ENCODE measurements at regions of chr3 and their contacts with region 1.

Region 1: GRCh38 chr3:119676771-119677640 is at the start of gene COX17:
- DNase-seq: peak; percentile 98
- H3K4me3 Mint-ChIP-seq: peak within 1 kb of the TSS; percentile 79
- H3K27ac Mint-ChIP-seq: peak within 1 kb of the TSS; percentile 91
- H3K4me1 Mint-ChIP-seq: peaks cover 8% of the 10 kb centered on the region
- H3K27me3 Mint-ChIP-seq: no peaks in the 10 kb centered on the region
- CTCF ChIP-seq: no peak
- total RNA-seq, gene COX17: 47.9 and 55.4 TPM in 2 replicates

Region 2: DNA sequence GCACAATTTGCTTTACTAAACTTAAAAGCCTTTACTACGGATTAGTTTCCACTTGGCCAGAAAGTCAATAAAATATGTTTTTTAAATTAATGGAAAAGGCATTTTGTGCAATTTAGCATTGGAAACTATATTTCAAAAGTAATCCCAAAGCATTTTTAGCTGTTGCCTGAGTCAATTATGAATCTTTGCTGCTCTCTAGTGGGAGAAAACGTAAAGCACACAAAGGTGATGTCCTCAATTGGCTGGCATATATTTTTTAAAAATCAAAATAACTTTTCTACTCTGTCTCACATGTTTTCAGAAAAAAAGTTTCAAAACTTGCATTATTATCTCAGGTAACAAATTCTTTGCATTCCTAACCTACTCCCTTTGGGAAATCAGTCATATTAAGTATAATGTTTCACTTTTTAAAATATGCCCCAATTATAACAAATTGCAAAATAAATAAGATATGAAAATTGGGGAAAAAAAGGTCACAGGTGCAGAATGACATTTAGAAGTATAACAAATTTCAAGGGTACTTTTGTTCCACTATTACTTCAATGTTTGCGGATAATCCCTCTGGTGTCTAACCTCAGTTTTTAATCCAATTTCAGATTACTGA is 578.3 kb before region 1 on chr3:
- CTCF ChIA-PET with region 1: interaction called, 4 read pairs
- POLR2A ChIA-PET with region 1: no interaction called
- intact Hi-C with region 1: loop called (anchors 1 kb)
- DNase-seq: peak; percentile 56
- H3K4me3 Mint-ChIP-seq: no peak overlapping the region
- H3K27ac Mint-ChIP-seq: no peak overlapping the region
- H3K4me1 Mint-ChIP-seq: peaks cover 10% of the 10 kb centered on the region
- H3K27me3 Mint-ChIP-seq: no peaks in the 10 kb centered on the region
- CTCF ChIP-seq: peak; percentile 85

Region 3: DNA sequence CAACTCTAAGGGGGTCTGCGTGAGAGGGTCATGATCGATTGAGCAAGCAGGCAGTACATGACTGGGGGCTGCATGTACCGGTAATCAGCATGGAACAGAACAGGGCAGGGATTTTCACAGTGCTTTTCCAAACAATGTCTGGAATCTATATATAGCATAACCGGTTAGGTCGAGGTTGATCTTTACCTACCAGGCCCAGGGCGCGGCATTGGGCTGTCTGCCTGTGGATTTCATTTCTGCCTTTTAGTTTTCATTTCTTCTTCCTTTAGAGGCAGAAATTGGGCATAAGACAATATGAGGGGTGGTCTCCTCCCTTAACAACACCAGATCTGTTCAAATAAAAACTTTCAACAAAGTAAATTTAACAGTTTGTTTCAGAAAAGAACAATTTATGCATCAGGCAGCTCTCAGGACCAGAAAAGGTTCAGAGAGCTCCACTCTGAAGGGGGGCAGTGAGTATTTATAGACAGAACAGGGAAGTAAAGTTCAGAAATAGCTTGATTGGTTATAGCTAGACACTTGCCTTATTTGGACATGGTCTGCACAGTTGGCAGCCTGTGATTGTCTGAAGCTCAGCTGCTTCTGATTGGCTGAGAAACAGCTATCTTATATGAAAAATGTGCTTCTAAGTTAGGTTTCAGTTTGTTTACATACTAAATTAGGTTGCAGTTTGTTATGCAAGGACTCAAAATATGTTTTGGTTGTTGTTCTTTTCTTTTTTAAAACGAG is 419.2 kb before region 1 on chr3:
- CTCF ChIA-PET with region 1: no interaction called
- POLR2A ChIA-PET with region 1: no interaction called
- intact Hi-C with region 1: no loop called
- DNase-seq: peak; percentile 19
- H3K4me3 Mint-ChIP-seq: no peak overlapping the region
- H3K27ac Mint-ChIP-seq: no peak overlapping the region
- H3K4me1 Mint-ChIP-seq: no peaks in the 10 kb centered on the region
- H3K27me3 Mint-ChIP-seq: no peaks in the 10 kb centered on the region
- CTCF ChIP-seq: no peak

Region 4: DNA sequence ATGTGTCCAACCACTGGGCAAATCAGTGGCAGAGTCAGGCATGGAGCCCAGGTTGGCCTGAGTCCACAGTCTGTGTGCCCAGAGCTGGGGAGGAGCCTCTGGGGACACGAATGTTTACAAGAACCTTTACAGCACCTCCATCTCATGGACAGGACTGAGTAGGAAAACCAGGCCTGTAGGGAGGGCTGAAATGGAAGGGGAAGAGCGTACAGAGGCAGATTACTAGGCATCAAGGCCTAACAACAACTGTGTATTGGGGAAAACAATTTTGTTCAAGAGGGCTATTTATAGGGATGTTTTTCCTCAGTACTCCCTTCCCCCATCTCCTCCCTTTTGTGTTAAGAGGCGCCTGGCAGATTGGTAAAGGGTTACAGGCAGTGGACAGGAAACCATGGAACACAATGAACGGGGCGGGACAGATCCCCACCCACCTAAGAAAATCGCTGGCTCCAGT is 397.9 kb before region 1 on chr3:
- CTCF ChIA-PET with region 1: interaction called, 25 read pairs
- POLR2A ChIA-PET with region 1: no interaction called
- intact Hi-C with region 1: loop called (anchors 1 kb)
- DNase-seq: peak; percentile 28
- H3K4me3 Mint-ChIP-seq: no peak overlapping the region
- H3K27ac Mint-ChIP-seq: no peak overlapping the region
- H3K4me1 Mint-ChIP-seq: no peaks in the 10 kb centered on the region
- H3K27me3 Mint-ChIP-seq: no peaks in the 10 kb centered on the region
- CTCF ChIP-seq: no peak

Region 5: GRCh38 chr3:119481079-119481478 is 195.9 kb before region 1 on chr3:
- CTCF ChIA-PET with region 1: no interaction called
- POLR2A ChIA-PET with region 1: interaction called, 10 read pairs
- intact Hi-C with region 1: no loop called
- DNase-seq: no peak
- H3K4me3 Mint-ChIP-seq: no peak overlapping the region
- H3K27ac Mint-ChIP-seq: peak overlapping the region; percentile 79
- H3K4me1 Mint-ChIP-seq: peaks cover 5% of the 10 kb centered on the region
- H3K27me3 Mint-ChIP-seq: no peaks in the 10 kb centered on the region
- CTCF ChIP-seq: no peak

Region 6: GRCh38 chr3:119524931-119525662 is 151.9 kb before region 1 on chr3:
- CTCF ChIA-PET with region 1: interaction called, 4 read pairs
- POLR2A ChIA-PET with region 1: no interaction called
- intact Hi-C with region 1: loop called (anchors 10 kb)
- DNase-seq: no peak
- H3K4me3 Mint-ChIP-seq: no peak overlapping the region
- H3K27ac Mint-ChIP-seq: no peak overlapping the region
- H3K4me1 Mint-ChIP-seq: peaks cover 11% of the 10 kb centered on the region
- H3K27me3 Mint-ChIP-seq: no peaks in the 10 kb centered on the region
- CTCF ChIP-seq: peak; percentile 6

Region 7: GRCh38 chr3:119550192-119550910 is 126.7 kb before region 1 on chr3:
- CTCF ChIA-PET with region 1: no interaction called
- POLR2A ChIA-PET with region 1: no interaction called
- intact Hi-C with region 1: no loop called
- DNase-seq: no peak
- H3K4me3 Mint-ChIP-seq: no peak overlapping the region
- H3K27ac Mint-ChIP-seq: no peak overlapping the region
- H3K4me1 Mint-ChIP-seq: no peaks in the 10 kb centered on the region
- H3K27me3 Mint-ChIP-seq: no peaks in the 10 kb centered on the region
- CTCF ChIP-seq: no peak

Region 8: DNA sequence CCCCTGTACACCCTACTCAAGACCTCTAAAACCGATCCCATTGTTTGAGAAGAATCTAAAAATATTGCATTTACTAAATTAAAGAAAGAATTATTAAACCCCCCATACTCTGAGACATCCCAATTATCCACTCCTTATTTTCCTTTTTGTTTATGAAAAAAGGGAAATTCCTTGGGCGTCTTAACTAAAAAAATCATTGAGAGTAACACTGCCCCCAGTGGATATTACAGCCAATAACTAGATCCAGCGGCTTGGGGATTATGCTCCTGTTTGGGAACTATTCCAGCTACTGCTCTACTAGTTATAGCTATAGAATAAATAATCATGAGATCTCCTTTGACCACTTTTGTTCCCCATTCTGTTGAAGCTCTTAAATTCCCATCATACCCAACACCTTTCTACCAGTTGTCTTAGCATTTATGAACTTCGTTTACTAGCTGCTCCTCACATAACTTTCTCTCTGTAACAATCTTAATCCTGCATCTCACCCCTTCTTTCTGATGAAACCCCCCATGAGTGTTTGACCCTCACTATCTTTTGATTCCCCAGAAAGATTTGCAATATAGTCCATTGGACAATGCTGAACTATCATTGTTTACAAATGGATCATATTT is 13.1 kb after region 1 on chr3:
- CTCF ChIA-PET with region 1: interaction called, 36 read pairs
- POLR2A ChIA-PET with region 1: no interaction called
- intact Hi-C with region 1: no loop called
- DNase-seq: peak; percentile 48
- H3K4me3 Mint-ChIP-seq: no peak overlapping the region
- H3K27ac Mint-ChIP-seq: no peak overlapping the region
- H3K4me1 Mint-ChIP-seq: no peaks in the 10 kb centered on the region
- H3K27me3 Mint-ChIP-seq: no peaks in the 10 kb centered on the region
- CTCF ChIP-seq: peak; percentile 33